Activated B cell treated with CpG ODN at 0.5 μM for 24 hours (primary cell): ENCODE measurements at regions of chr12 and their contacts with region 1.

Region 1: DNA sequence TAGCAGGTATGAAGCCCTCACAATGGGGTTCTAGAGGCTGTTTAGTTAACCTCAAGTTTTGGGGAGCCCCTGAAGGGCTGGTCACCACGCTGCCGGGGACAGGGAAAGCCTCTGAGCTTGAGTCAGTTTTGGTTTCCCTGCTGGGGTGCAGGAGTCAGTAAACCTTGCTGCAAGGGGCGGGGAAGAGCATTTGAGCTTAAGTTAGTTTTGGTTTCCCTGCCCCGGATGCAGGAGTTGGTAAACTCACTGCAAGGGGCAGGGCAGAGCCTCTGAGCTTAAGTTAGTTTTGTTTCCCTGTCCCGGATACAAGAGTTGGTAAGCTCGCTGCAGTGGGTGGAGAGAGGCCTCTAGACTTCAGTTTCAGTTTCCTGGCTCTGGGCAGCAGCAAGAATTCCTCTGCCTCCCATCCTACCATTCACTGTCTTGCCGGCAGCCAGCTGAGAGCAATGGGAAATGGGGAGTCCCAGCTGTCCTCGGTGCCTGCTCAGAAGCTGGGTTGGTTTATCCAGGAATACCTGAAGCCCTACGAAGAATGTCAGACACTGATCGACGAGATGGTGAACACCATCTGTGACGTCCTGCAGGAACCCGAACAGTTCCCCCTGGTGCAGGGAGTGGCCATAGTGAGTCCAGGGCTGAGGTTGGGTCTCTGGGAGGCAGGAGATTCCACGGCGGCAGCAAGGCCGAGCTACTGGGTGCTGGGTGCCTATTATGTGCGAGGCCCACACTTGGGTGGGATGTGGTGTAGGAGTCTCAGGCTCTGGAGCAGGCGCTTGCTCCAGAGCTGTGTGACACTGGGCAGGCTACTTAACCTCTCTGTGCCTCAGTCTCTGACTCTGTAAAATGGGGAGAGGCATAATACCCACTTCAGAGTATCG is at the start of gene OAS2:
- DNase-seq: peak; percentile 51
- ATAC-seq: peak; percentile 92
- H3K4me3 Mint-ChIP-seq: peak within 1 kb of the TSS; percentile 96
- H3K27ac Mint-ChIP-seq: peak within 1 kb of the TSS; percentile 98
- H3K4me1 Mint-ChIP-seq: peaks cover 55% of the 10 kb centered on the region
- H3K27me3 Mint-ChIP-seq: no peaks in the 10 kb centered on the region
- CTCF ChIP-seq: no peak
- total RNA-seq, gene OAS2: 46.0 and 51.9 TPM in 2 replicates

Region 2: DNA sequence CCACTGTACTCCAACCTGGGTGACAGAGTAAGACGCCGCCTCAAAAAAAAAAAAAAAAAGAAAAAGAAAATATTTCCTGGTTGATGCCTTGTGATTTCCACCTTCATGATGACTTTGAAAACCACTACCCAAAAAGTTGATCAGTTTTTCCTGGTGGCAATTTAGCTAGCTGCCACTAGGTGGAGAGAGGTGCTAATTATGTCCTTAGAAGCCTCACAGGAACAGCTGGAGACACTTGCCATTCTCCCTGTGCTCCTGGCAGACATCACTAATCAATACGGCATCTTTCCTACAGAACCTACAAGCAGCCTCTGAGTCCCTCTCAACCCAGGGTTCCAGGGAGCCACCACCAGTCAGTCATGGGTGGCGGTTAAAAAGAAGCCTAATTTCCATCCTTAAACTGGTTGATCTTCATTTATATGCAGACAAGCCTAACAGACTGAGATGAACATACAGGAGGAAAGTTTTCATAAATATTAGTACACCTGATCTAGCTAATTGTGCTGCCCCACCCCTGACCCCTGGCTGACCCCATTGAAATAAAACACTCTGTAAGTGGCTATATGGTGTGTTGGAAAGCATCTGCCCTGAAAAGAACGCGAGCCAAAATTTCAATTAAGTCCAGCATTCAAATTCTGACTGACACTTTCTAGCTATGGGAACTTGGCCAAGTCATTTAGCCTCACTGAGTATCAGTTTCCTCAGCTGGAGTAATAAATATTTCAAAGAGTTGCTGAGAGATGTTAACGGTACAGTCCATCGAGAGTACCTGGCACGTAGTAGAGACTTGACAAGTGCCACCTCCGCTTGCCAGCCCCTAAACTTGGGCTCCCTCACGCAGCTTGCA is 77.9 kb before region 1 on chr12:
- CTCF ChIA-PET with region 1: interaction called, 8 read pairs
- POLR2A ChIA-PET with region 1: interaction called, 48 read pairs
- intact Hi-C with region 1: no loop called
- DNase-seq: no peak
- ATAC-seq: peak; percentile 45
- H3K4me3 Mint-ChIP-seq: no peak overlapping the region
- H3K27ac Mint-ChIP-seq: no peak overlapping the region
- H3K4me1 Mint-ChIP-seq: peaks cover 42% of the 10 kb centered on the region
- H3K27me3 Mint-ChIP-seq: peaks cover 2% of the 10 kb centered on the region
- CTCF ChIP-seq: peak; percentile 73

Region 3: GRCh38 chr12:112924986-112925385 is 53.4 kb before region 1 on chr12:
- CTCF ChIA-PET with region 1: no interaction called
- POLR2A ChIA-PET with region 1: interaction called, 10 read pairs
- intact Hi-C with region 1: no loop called
- DNase-seq: no peak
- ATAC-seq: peak; percentile 64
- H3K4me3 Mint-ChIP-seq: peak overlapping the region; percentile 28
- H3K27ac Mint-ChIP-seq: peak overlapping the region; percentile 73
- H3K4me1 Mint-ChIP-seq: peaks cover 46% of the 10 kb centered on the region
- H3K27me3 Mint-ChIP-seq: no peaks in the 10 kb centered on the region
- CTCF ChIP-seq: no peak

Region 4: GRCh38 chr12:112964067-112964670 is 14.2 kb before region 1 on chr12:
- CTCF ChIA-PET with region 1: no interaction called
- POLR2A ChIA-PET with region 1: interaction called, 10 read pairs
- intact Hi-C with region 1: no loop called
- DNase-seq: no peak
- ATAC-seq: no peak
- H3K4me3 Mint-ChIP-seq: no peak overlapping the region
- H3K27ac Mint-ChIP-seq: no peak overlapping the region
- H3K4me1 Mint-ChIP-seq: no peaks in the 10 kb centered on the region
- H3K27me3 Mint-ChIP-seq: no peaks in the 10 kb centered on the region
- CTCF ChIP-seq: no peak

Region 5: DNA sequence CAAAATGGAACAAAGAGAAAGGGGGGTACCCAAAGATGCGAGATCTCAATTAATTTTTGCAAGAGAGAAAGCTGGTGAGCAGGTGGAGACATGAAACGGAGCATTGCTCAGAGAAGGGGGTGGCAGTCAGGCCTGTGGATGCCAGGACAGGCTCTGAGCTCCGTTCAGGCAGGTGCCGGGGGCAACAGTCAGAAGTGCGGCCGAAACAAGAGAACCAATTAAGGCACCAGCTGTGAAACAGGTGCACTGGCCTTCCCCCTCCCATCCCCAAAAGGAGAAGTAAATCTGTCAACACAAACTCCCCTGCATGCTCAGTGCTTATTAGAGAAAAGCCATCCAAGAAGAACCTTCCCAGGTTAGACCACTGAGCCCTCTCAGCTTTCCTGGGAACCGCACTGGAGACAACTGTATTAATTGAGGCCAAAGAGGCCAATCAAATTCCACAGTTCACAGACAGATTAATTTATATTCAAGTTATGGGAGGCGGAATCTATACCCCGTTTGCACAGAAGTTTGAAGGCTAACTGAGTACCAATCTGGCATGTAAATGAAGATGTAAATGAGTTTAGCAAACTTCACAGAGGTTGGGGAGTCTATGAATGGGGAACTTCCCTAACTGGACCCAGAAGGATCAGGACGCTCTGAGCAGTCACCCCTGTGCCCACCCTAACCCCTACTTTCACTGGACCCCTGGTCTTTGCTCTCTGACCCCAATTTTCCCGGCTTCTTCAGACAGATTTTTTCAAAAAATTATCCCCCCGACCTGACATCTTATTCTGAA is 20.8 kb after region 1 on chr12:
- CTCF ChIA-PET with region 1: interaction called, 4 read pairs
- POLR2A ChIA-PET with region 1: interaction called, 11 read pairs
- intact Hi-C with region 1: loop called (anchors 1 kb)
- DNase-seq: no peak
- ATAC-seq: peak; percentile 95
- H3K4me3 Mint-ChIP-seq: peak overlapping the region; percentile 3
- H3K27ac Mint-ChIP-seq: peak overlapping the region; percentile 79
- H3K4me1 Mint-ChIP-seq: peaks cover 30% of the 10 kb centered on the region
- H3K27me3 Mint-ChIP-seq: no peaks in the 10 kb centered on the region
- CTCF ChIP-seq: no peak

Region 6: GRCh38 chr12:113184900-113185773 is 206.7 kb after region 1 on chr12 and contains the starts of genes DDX54 and RITA1:
- CTCF ChIA-PET with region 1: no interaction called
- POLR2A ChIA-PET with region 1: interaction called, 10 read pairs
- intact Hi-C with region 1: no loop called
- DNase-seq: peak; percentile 87
- ATAC-seq: peak; percentile 83
- H3K4me3 Mint-ChIP-seq: peak within 1 kb of the TSS; percentile 93
- H3K27ac Mint-ChIP-seq: peak within 1 kb of the TSS; percentile 94
- H3K4me1 Mint-ChIP-seq: peaks cover 39% of the 10 kb centered on the region
- H3K27me3 Mint-ChIP-seq: no peaks in the 10 kb centered on the region
- CTCF ChIP-seq: no peak
- total RNA-seq, gene DDX54: 115 TPM in 2 replicates
- total RNA-seq, gene RITA1: 15.5 and 18.2 TPM in 2 replicates